Activated CD4-positive, alpha-beta T cell treated with anti-CD3 and anti-CD28 coated beads, Interleukin-2, amount 10 ng/mL, durations not matched to agents 24 days and 14 days (primary cell): ENCODE measurements at regions of chr9 and their contacts with region 1.

Region 1: GRCh38 chr9:117282541-117282940 is 132.3 kb downstream of the ASTN2 start:
- DNase-seq: no peak
- H3K4me3 Mint-ChIP-seq: no peak overlapping the region
- H3K27ac Mint-ChIP-seq: no peak overlapping the region
- H3K4me1 Mint-ChIP-seq: no peaks in the 10 kb centered on the region
- H3K27me3 Mint-ChIP-seq: no peaks in the 10 kb centered on the region

Region 2: GRCh38 chr9:116494815-116495634 is 787.5 kb before region 1 on chr9:
- intact Hi-C with region 1: loop called (anchors 5 kb)
- DNase-seq: peak; percentile 73
- H3K4me3 Mint-ChIP-seq: no peak overlapping the region
- H3K27ac Mint-ChIP-seq: no peak overlapping the region
- H3K4me1 Mint-ChIP-seq: no peaks in the 10 kb centered on the region
- H3K27me3 Mint-ChIP-seq: no peaks in the 10 kb centered on the region